Calu3 (cell line): ENCODE measurements at regions of chr5 and their contacts with region 1.

Region 1: GRCh38 chr5:124561451-124561850 is 185.0 kb downstream of the ZNF608 start:
- DNase-seq: no peak
- H3K4me3 Mint-ChIP-seq: no peak overlapping the region
- H3K27ac Mint-ChIP-seq: no peak overlapping the region
- H3K4me1 Mint-ChIP-seq: no peaks in the 10 kb centered on the region
- H3K27me3 Mint-ChIP-seq: no peaks in the 10 kb centered on the region
- CTCF ChIP-seq: no peak

Region 2: GRCh38 chr5:124655922-124656511 is 94.6 kb after region 1 on chr5:
- CTCF ChIA-PET with region 1: interaction called, 10 read pairs
- intact Hi-C with region 1: no loop called
- DNase-seq: peak; percentile 64
- H3K4me3 Mint-ChIP-seq: no peak overlapping the region
- H3K27ac Mint-ChIP-seq: no peak overlapping the region
- H3K4me1 Mint-ChIP-seq: peaks cover 64% of the 10 kb centered on the region
- H3K27me3 Mint-ChIP-seq: no peaks in the 10 kb centered on the region
- CTCF ChIP-seq: no peak